ENCODE measurements at regions of chr9 and their contacts with region 1.

Region 1: DNA sequence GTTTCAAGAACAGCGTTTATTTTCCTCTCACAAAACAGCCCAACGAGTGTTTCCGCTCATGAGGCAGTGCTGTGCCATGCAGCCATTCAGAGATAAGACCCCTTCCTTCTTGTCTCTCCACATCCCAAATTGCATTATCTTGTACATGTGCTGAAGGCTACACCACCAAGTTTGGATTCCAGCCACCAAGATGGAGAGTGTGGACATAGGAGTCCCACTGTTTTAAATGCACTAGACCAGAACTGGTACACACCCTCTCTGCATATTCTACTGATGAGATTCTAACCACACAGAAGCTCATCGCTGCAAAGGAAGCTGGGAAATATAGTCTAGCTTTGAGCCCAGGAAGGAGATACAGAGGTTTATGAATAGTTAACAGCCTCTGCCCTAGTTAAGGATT is 509.4 kb downstream of the NFIB start:
- DNase-seq: no peak

Region 2: DNA sequence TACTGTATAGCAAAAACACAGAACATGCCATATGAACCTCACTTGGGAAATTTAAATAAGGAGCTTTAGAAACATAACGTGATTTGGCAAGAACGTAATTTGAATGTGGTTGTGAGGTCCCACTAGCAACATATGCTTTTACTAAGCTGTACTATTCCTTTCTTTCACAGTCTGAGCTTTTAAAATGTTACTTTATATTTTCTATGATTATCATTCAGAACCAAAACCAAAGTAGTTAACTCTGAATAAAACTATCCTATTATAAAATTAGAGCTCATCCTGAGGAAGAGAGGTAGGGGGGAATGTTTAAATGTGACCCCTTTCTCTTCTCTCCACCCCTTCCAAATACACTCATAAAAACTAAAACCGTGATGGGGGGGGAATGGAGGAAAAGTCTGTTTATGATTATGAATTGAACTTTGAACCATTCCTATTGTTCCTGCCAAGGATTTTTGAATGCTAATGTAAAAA is 73.7 kb after region 1 on chr9:
- intact Hi-C with region 1: loop called in 1 of 2 experiments (anchors 10 kb)
- DNase-seq: no peak

Measured in posterior vena cava (tissue), 2 donors.